ENCODE measurements at regions of chr22 and their contacts with region 1.

Region 1: GRCh38 chr22:30326706-30327362 is at the start of gene TBC1D10A:
- DNase-seq: peak; percentile 88 to 92 (median 90)
- H3K4me3 ChIP-seq: peak within 1 kb of the TSS; percentile 86
- H3K27ac ChIP-seq: peak within 1 kb of the TSS; percentile 71 to 76
- H3K4me1 ChIP-seq: peaks cover 18% of the 10 kb centered on the region
- H3K27me3 ChIP-seq: no peaks in the 10 kb centered on the region
- CTCF ChIP-seq: no peak
- EP300 ChIP-seq: no peak
- POLR2A ChIP-seq: peak; percentile 87
- total RNA-seq, gene TBC1D10A: 19.6 to 39.3 (median 30.7) TPM

Region 2: DNA sequence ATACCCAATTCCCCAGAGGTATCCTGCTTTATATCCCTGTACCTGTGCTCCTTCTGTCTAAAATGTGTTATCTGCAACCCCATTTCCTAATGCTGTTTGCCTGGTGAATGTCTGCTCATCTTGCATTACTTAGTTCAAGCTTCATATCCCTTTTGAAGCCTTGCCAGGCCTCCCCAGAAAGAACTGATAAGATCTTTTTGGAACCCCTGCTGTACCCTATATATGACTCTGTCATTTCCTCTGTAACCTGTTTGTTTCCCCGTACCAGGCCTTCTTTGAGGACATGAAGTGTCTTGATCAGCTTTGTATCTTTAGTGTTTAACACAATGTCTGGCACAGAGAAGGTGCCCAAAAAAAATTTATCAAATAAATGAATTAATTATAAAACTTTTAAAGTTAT is 157.8 kb before region 1 on chr22:
- intact Hi-C with region 1: no loop called
- DNase-seq: no peak
- H3K4me3 ChIP-seq: no peak overlapping the region
- H3K27ac ChIP-seq: no peak overlapping the region
- H3K4me1 ChIP-seq: no peaks in the 10 kb centered on the region
- H3K27me3 ChIP-seq: no peaks in the 10 kb centered on the region
- CTCF ChIP-seq: no peak
- EP300 ChIP-seq: no peak
- POLR2A ChIP-seq: no peak

Region 3: GRCh38 chr22:30289134-30289979 is 37.5 kb before region 1 on chr22 and contains the start of gene CASTOR1:
- intact Hi-C with region 1: loop called in 1 of 4 experiments (anchors 2 kb)
- DNase-seq: peak; percentile 98 to 99 (median 99)
- H3K4me3 ChIP-seq: peak within 1 kb of the TSS; percentile 97
- H3K27ac ChIP-seq: peak within 1 kb of the TSS; percentile 83 to 87
- H3K4me1 ChIP-seq: peaks cover 17% of the 10 kb centered on the region
- H3K27me3 ChIP-seq: no peaks in the 10 kb centered on the region
- CTCF ChIP-seq: peak in 1 of 3 donors; percentile 27
- EP300 ChIP-seq: peak; percentile 6
- POLR2A ChIP-seq: peak; percentile 79
- total RNA-seq, gene CASTOR1: 11.0 to 31.2 (median 20.6) TPM

Region 4: DNA sequence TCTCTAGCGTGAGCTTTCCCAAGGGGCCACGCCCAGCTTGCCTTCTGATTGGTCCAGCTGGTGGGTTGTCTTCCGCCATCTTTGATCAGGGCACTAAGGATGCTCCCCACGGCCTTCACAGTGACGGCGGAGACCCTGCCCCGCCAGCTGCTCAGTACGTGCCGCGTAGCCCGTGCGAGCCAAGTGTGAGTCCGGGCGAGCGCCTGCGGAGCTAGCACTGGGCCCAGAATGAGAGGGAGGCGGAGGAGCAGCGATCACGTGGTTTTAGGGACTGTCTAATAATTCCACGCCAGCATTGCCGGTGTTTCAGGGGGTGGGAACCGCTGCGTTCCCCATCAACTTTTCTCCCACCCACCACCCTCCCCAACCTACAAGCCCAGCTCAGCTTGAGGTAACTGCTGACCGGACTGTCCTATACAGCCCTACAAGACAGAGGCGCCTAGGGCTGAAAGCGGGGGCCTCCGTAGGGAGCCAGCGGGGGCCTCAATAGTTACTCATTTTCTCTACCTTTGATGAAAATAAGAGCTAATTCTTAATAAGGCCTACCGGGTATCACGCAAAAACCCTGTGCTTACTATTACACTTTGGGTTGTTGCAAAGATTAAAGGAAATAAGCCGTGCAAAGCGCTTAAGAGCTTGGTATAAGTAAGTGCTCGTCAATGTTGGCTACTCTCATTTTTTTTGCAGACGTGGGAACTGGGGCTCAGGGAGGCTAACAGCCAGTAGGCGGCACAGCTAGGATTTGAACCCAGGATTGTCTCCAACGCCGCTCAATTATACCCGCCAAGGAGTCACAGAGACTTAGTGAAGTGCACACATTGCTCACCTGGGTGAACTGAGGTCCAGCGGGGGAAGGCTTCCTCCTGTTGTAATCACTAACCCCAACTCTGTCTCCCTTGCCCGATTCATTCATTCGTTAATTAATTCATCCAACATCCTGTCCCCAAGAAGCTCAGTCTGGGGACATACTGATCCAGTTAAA is 97.4 kb after region 1 on chr22:
- intact Hi-C with region 1: no loop called
- DNase-seq: peak; percentile 98 to 99 (median 99)
- H3K4me3 ChIP-seq: peak overlapping the region; percentile 55
- H3K27ac ChIP-seq: peak overlapping the region; percentile 37 to 97
- H3K4me1 ChIP-seq: peaks cover 6% of the 10 kb centered on the region
- H3K27me3 ChIP-seq: no peaks in the 10 kb centered on the region
- CTCF ChIP-seq: peak in 1 of 3 donors; percentile 6
- EP300 ChIP-seq: peak; percentile 76
- POLR2A ChIP-seq: peak; percentile 22

Region 5: GRCh38 chr22:30763815-30764686 is 437.2 kb after region 1 on chr22:
- intact Hi-C with region 1: no loop called
- DNase-seq: peak in 4 of 5 donors; percentile 21 to 43 (median 24)
- H3K4me3 ChIP-seq: no peak overlapping the region
- H3K27ac ChIP-seq: no peak overlapping the region
- H3K4me1 ChIP-seq: no peaks in the 10 kb centered on the region
- H3K27me3 ChIP-seq: no peaks in the 10 kb centered on the region
- CTCF ChIP-seq: no peak
- EP300 ChIP-seq: no peak
- POLR2A ChIP-seq: no peak

Measured in ovary (tissue), 10 donors.